ENCODE measurements at regions of chr4 and their contacts with region 1.

Region 1: GRCh38 chr4:87530868-87531267 is 1.7 kb upstream of the SPARCL1 start:
- DNase-seq: peak; percentile 52
- H3K4me3 ChIP-seq: no peak overlapping the region
- H3K27ac ChIP-seq: peak overlapping the region; percentile 79 to 91 (median 84)
- H3K4me1 ChIP-seq: peaks cover 0 to 19% (median 3%) of the 10 kb centered on the region in 4 donors
- H3K27me3 ChIP-seq: no peaks in the 10 kb centered on the region
- CTCF ChIP-seq: no peak
- EP300 ChIP-seq: peak; percentile 92
- POLR2A ChIP-seq: no peak

Region 2: DNA sequence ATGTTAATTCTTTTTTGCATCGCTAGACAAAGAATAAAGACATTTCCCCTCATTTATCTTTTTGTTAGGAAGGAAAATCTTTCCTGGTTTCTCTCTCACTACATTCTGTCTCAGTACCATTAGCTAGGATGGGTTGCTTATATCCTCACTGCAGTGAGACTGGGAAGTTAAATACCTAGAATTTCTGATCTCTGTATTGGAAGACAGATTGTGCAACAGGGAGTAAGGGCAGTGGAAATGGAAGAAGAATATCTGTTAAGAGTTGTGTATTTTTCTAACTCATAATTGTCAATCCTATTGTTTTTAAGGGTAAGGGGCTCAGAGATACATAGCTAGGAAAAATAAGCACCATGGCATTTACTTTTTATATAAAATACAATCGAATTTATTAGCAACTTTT is 917.1 kb before region 1 on chr4:
- in situ Hi-C with region 1: no loop called
- intact Hi-C with region 1: loop called (anchors 5 kb)
- DNase-seq: no peak
- H3K4me3 ChIP-seq: no peak overlapping the region
- H3K27ac ChIP-seq: no peak overlapping the region
- H3K4me1 ChIP-seq: no peaks in the 10 kb centered on the region
- H3K27me3 ChIP-seq: no peaks in the 10 kb centered on the region
- CTCF ChIP-seq: no peak
- EP300 ChIP-seq: no peak
- POLR2A ChIP-seq: no peak

Region 3: GRCh38 chr4:88017516-88018297 is 486.8 kb after region 1 on chr4:
- in situ Hi-C with region 1: loop called in 1 of 4 experiments (anchors 10 kb)
- intact Hi-C with region 1: no loop called
- DNase-seq: no peak
- H3K4me3 ChIP-seq: no peak overlapping the region
- H3K27ac ChIP-seq: peak overlapping the region; percentile 75 to 85 (median 84)
- H3K4me1 ChIP-seq: peaks cover 5 to 44% (median 13%) of the 10 kb centered on the region in 4 donors
- H3K27me3 ChIP-seq: no peaks in the 10 kb centered on the region
- CTCF ChIP-seq: no peak
- EP300 ChIP-seq: peak; percentile 60
- POLR2A ChIP-seq: no peak